ENCODE measurements at regions of chr9 and their contacts with region 1.

Region 1: DNA sequence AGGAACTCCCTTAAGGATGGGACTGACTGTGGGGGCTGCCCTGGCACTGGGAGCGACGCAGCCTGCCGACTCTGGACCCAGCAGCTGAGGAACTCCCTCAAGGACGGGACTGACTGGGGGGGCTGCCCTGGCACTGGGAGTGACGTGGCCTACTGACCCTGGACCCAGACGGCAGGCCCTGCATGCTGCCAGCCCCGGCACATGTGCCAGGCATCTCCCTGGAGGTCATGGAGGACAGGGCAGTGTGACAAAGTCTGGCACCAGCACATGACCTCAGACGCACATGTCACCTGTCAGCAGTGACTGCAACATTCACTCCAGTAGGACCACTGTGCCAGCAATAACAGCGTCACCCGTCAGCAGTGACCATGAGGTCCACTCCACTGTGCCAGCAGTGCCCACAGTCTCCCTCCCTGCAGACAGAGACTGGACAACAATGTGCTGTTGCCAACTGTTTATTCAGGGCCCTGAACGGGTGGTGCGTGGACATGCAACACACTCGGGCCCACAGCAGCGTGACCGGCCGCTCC is 4.5 kb downstream of the FBXW5 start:
- DNase-seq: no peak

Region 2: GRCh38 chr9:136885950-136886578 is 54.0 kb before region 1 on chr9 and contains the start of gene TRAF2:
- in situ Hi-C with region 1: loop called (anchors 10 kb)
- DNase-seq: peak; percentile 100

Measured in T47D (cell line).